Posterior vena cava (tissue), 2 donors: ENCODE measurements at regions of chr15 and their contacts with region 1.

Region 1: DNA sequence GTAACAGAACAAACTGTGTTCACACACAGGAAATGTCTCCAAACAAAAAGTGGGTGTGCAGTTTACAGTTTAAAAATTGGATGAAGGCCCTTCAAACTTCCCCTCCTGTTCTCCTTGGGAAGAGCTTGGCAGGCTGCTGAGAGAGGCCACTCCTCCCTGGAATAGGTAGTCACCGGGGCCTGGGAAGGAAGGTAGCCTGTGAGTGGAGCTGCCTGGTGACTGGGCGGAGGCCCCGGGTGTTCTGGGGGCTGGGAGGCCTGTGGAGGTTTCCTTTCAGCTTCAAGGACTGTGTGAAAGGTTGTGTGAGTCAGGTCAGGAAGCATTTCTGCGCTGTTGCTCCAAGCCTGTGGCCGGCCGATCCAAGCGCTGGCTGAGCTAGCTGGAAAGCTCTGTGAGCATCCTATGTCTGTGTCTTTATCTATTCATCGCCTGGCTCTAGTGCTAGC is 14.1 kb downstream of the SLCO3A1 start:
- DNase-seq: peak; percentile 90

Region 2: DNA sequence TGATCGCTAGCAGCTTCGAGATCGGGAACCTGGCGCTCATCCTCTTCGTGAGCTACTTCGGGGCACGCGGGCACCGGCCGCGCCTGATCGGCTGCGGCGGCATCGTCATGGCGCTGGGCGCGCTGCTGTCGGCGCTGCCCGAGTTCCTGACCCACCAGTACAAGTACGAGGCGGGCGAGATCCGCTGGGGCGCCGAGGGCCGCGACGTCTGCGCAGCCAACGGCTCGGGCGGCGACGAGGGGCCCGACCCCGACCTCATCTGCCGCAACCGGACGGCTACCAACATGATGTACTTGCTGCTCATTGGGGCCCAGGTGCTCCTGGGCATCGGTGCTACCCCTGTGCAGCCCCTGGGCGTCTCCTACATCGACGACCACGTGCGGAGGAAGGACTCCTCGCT is 48.4 kb after region 1 on chr15:
- intact Hi-C with region 1: loop called (anchors 2 to 5 kb)
- DNase-seq: no peak

Region 3: DNA sequence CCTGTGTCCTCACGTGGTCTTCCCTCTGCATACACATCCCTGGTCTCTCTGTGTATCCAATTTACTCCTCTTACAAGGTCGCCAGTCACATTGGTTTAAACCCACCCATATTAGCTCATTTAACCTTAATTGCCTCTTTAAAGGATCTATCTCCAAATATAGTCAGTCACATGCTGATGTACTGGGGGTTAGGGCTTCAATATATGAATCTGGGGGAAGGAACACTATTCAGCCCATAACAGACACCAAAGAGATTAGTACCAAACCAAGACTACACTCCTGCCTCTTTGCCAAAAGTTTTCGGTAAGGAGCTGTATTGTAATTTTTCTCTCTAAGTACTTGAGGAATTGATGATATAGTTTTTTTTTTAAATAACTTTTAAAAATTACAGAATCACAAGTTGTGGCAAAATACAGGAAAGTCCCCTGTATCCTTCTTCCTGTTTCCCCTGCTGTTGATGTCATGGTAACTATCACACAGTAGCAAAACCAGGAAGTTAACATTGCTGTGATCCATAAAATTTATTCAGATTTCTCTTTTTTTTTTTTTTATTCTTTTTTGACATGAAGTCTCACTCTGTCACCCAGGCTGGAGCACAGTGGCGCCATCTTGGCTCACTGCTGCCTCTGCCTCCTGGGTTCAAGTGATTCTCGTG is 53.7 kb after region 1 on chr15:
- intact Hi-C with region 1: loop called (anchors 2 to 5 kb)
- DNase-seq: no peak